ENCODE measurements at regions of chr6 and their contacts with region 1.

Region 1: GRCh38 chr6:34901930-34902329 is 12.9 kb downstream of the ANKS1A start:
- DNase-seq: no peak
- ATAC-seq: no peak
- H3K4me3 ChIP-seq: no peak overlapping the region
- H3K27ac ChIP-seq: no peak overlapping the region
- H3K4me1 ChIP-seq: peaks cover 0 to 54% (median 30%) of the 10 kb centered on the region in 9 donors
- H3K27me3 ChIP-seq: no peaks in the 10 kb centered on the region
- CTCF ChIP-seq: no peak

Region 2: DNA sequence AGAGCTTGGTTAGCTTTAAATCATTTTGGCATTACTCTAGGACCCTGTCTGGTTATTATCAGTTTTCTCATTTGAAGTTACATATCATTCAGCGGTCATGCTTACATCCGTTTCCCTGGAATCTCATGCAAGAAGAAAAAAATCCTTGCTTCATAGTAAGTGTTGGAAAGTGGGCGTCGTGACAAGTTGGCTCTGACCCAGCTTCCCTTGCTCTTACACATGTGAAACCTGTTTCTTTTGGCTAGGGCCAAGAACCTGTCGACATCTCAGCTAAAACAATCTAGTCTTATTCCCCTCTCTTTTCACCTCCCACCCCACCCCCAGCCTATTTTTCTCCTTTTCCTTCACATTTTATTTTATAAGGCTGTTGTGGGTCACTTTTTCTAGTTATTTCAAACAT is 32.6 kb after region 1 on chr6:
- intact Hi-C with region 1: loop called in 1 of 10 experiments (anchors 5 kb)
- DNase-seq: peak; percentile 86 to 89
- ATAC-seq: peak; percentile 77 to 90 (median 80)
- H3K4me3 ChIP-seq: no peak overlapping the region
- H3K27ac ChIP-seq: peak overlapping the region in 7 of 10 donors; percentile 0 to 48 (median 26)
- H3K4me1 ChIP-seq: peaks cover 8 to 57% (median 48%) of the 10 kb centered on the region in 9 donors
- H3K27me3 ChIP-seq: no peaks in the 10 kb centered on the region
- CTCF ChIP-seq: no peak

Region 3: GRCh38 chr6:34955442-34955841 is 53.5 kb after region 1 on chr6:
- intact Hi-C with region 1: loop called in 4 of 10 experiments (anchors 5 to 10 kb)
- DNase-seq: no peak
- ATAC-seq: peak in 3 of 8 donors; percentile 24 to 44 (median 28)
- H3K4me3 ChIP-seq: no peak overlapping the region
- H3K27ac ChIP-seq: peak overlapping the region in 2 of 10 donors; percentile 37 to 74
- H3K4me1 ChIP-seq: peaks cover 3 to 79% (median 70%) of the 10 kb centered on the region in 9 donors
- H3K27me3 ChIP-seq: no peaks in the 10 kb centered on the region
- CTCF ChIP-seq: no peak

Region 4: DNA sequence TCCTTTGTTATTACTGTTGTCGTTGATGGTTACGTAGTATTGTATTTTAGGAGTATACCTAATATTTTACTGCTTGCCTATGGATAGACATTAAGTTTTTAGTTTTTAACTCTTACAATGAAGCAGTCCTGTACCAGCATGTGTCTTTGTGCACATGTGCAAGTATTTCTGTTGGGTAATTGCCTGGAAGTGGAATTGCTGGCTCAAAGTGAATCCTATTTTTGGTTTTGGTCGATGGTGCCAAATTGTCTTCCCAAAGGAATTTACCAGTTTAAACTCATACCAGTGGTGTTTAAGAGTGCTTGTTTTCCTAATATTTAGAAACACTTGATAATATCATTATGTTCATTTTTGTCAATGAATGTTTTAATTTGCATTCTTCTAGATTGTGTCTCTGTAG is 62.6 kb after region 1 on chr6:
- intact Hi-C with region 1: loop called in 4 of 10 experiments (anchors 5 to 10 kb)
- DNase-seq: peak in 1 of 2 donors; percentile 61
- ATAC-seq: peak in 7 of 8 donors; percentile 49 to 68 (median 62)
- H3K4me3 ChIP-seq: no peak overlapping the region
- H3K27ac ChIP-seq: peak overlapping the region in 9 of 10 donors; percentile 9 to 73 (median 48)
- H3K4me1 ChIP-seq: peaks cover 0 to 68% (median 36%) of the 10 kb centered on the region in 9 donors
- H3K27me3 ChIP-seq: no peaks in the 10 kb centered on the region
- CTCF ChIP-seq: no peak

Region 5: GRCh38 chr6:35139908-35140655 is 238.2 kb after region 1 on chr6:
- intact Hi-C with region 1: loop called in 1 of 10 experiments (anchors 10 kb)
- DNase-seq: peak in 1 of 2 donors; percentile 55
- ATAC-seq: peak in 6 of 8 donors; percentile 38 to 76 (median 63)
- H3K4me3 ChIP-seq: no peak overlapping the region
- H3K27ac ChIP-seq: no peak overlapping the region
- H3K4me1 ChIP-seq: peaks cover 0 to 26% (median 10%) of the 10 kb centered on the region in 9 donors
- H3K27me3 ChIP-seq: peaks cover 0 to 15% (median 0%) of the 10 kb centered on the region in 7 donors
- CTCF ChIP-seq: peak; percentile 63 to 92 (median 85)